ENCODE measurements at regions of chr10 and their contacts with region 1.

Region 1: DNA sequence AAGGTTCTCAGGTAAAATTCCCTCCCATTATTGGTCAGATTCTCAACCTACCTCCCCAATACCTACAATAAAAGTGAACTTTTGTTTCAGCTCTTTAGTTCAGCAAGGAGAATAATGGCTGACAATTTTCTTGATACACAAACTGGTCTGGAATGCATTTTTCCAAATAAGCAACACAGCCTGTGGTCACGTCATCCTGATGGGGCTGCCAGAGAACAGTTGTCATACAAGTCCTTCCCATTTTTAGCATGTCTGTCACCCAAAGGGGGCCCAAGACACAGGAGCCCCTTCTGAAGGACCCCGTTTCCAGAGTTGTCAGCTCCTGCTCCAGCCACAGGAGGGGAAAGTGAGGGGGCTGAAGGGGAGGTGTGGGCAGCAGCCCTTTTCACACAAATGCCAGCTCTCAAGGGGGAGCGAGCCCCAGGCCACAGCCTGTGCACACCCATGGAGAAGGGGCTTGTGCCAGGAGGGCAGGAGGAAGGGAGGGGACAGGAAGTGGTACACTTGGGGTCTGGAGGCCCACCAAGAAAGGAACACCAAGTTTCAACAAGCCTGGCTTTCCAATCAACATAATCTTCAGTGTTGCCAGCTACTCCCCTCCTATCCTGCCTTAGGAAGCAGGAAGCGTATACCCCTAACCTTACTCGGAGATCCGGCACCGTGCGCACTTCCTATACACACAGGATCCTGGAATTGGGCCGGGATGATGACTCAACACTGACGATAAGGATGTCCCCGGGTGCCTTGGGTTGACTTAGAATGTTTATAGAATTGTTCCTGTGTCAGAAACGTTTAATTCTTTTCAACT is 43.4 kb upstream of the PDLIM1 start:
- DNase-seq: peak; percentile 94
- ATAC-seq: peak; percentile 89
- H3K4me3 ChIP-seq: peak overlapping the region; percentile 18; the same call in 1 of the 2 replicates
- H3K27ac ChIP-seq: peak overlapping the region; percentile 95
- H3K4me1 ChIP-seq: peaks cover 52% of the 10 kb centered on the region
- H3K27me3 ChIP-seq: no peaks in the 10 kb centered on the region
- CTCF ChIP-seq: no peak

Region 2: DNA sequence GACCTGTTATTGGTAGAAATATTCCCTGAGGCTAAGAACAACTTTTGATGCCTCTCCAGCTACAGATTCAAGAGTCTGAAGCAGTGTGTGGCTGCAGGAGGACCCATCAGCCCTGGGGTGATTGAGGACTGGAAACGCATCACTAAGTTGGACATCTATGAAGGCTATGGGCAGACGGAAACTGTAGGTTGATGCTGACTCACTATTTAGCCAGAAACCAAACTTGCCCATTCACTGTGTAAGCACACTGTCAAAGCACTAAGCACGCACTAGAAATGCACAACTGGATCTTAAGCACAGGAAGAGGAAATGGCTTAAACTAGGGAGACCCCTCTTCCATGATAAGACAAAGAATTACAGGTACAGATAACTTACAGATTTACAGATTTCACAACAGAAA is 119.4 kb before region 1 on chr10:
- CTCF ChIA-PET with region 1: no interaction called
- POLR2A ChIA-PET with region 1: no interaction called
- intact Hi-C with region 1: loop called (anchors 1 kb)
- DNase-seq: peak; percentile 87
- ATAC-seq: peak; percentile 95
- H3K4me3 ChIP-seq: peak overlapping the region; percentile 44; the same call in 1 of the 2 replicates
- H3K27ac ChIP-seq: peak overlapping the region; percentile 94
- H3K4me1 ChIP-seq: peaks cover 57% of the 10 kb centered on the region
- H3K27me3 ChIP-seq: no peaks in the 10 kb centered on the region
- CTCF ChIP-seq: no peak

Region 3: GRCh38 chr10:95289003-95289920 is 44.9 kb before region 1 on chr10:
- CTCF ChIA-PET with region 1: no interaction called
- POLR2A ChIA-PET with region 1: interaction called, 3 read pairs
- intact Hi-C with region 1: loop called (anchors 2 kb)
- DNase-seq: peak; percentile 71
- ATAC-seq: peak; percentile 23
- H3K4me3 ChIP-seq: peak overlapping the region; percentile 95
- H3K27ac ChIP-seq: peak overlapping the region; percentile 29; the same call in 1 of the 2 replicates
- H3K4me1 ChIP-seq: peaks cover 26% of the 10 kb centered on the region
- H3K27me3 ChIP-seq: no peaks in the 10 kb centered on the region
- CTCF ChIP-seq: peak; percentile 45

Region 4: GRCh38 chr10:95308389-95309302 is 25.6 kb before region 1 on chr10:
- CTCF ChIA-PET with region 1: no interaction called
- POLR2A ChIA-PET with region 1: no interaction called
- intact Hi-C with region 1: loop called (anchors 2 kb)
- DNase-seq: peak; percentile 97
- ATAC-seq: peak; percentile 95
- H3K4me3 ChIP-seq: peak overlapping the region; percentile 50; the same call in 1 of the 2 replicates
- H3K27ac ChIP-seq: peak overlapping the region; percentile 81
- H3K4me1 ChIP-seq: peaks cover 32% of the 10 kb centered on the region
- H3K27me3 ChIP-seq: no peaks in the 10 kb centered on the region
- CTCF ChIP-seq: no peak

Region 5: DNA sequence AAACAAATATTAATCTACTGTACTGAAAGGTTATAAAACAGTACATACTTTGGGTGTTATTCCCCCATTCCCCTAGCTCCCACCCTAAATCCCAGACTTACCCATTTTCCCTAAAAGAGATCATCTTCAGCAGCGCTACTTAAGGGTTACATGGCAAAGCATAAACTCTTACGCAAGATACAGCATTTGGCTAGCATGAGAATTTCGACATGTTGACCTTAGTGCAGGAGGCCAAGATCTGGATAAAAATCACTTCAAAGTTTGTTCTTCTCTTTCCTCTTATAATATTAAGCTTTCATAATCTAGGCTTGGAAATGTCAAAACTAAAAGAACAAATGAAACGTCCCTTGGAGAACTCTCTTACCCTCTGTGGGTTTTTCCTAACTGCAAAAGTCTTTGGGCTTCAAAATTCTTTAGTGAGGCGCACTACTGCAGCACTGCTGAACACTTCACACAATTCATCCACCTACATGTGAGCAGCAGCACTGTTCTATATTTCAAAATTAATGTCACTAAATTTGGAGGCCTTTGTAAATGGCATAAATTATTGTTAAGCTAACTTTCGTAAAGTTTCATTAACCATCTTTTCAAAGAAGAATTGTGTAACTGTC is 16.1 kb after region 1 on chr10:
- CTCF ChIA-PET with region 1: no interaction called
- POLR2A ChIA-PET with region 1: no interaction called
- intact Hi-C with region 1: no loop called
- DNase-seq: no peak
- ATAC-seq: no peak
- H3K4me3 ChIP-seq: no peak overlapping the region
- H3K27ac ChIP-seq: no peak overlapping the region
- H3K4me1 ChIP-seq: no peaks in the 10 kb centered on the region
- H3K27me3 ChIP-seq: no peaks in the 10 kb centered on the region
- CTCF ChIP-seq: no peak